ENCODE measurements at regions of chr3 and their contacts with region 1.

Region 1: GRCh38 chr3:195748661-195749060 is 27.9 kb downstream of the MUC20 start:
- DNase-seq: no peak
- ATAC-seq: no peak
- H3K4me3 ChIP-seq: peak overlapping the region; percentile 43 to 46
- H3K27ac ChIP-seq: 0 out of 2 replicates have a peak overlapping the region, but pooled peaks have one; percentile 2
- H3K4me1 ChIP-seq: peaks cover 7 to 13% of the 10 kb centered on the region in 2 experiments; a peak in 2 of 4 replicates
- H3K27me3 ChIP-seq: no peaks in the 10 kb centered on the region
- CTCF ChIP-seq: no peak
- POLR2A ChIP-seq: no peak
- RAD21 ChIP-seq: no peak

Region 2: GRCh38 chr3:195616712-195617086 is 132.0 kb before region 1 on chr3:
- CTCF ChIA-PET with region 1: no interaction called
- POLR2A ChIA-PET with region 1: no interaction called
- RAD21 ChIA-PET with region 1: no interaction called
- intact Hi-C with region 1: loop called (anchors 2 kb)
- DNase-seq: no peak
- ATAC-seq: no peak
- H3K4me3 ChIP-seq: no peak overlapping the region
- H3K27ac ChIP-seq: no peak overlapping the region
- H3K4me1 ChIP-seq: peaks cover 0 to 4% of the 10 kb centered on the region in 2 experiments; a peak in 1 of 4 replicates
- H3K27me3 ChIP-seq: no peaks in the 10 kb centered on the region
- CTCF ChIP-seq: no peak
- POLR2A ChIP-seq: no peak
- RAD21 ChIP-seq: no peak

Region 3: GRCh38 chr3:195729476-195730251 is 19.0 kb before region 1 on chr3:
- CTCF ChIA-PET with region 1: interaction called, 3 read pairs
- POLR2A ChIA-PET with region 1: no interaction called
- RAD21 ChIA-PET with region 1: no interaction called
- intact Hi-C with region 1: loop called (anchors 1 kb)
- DNase-seq: no peak
- ATAC-seq: no peak
- H3K4me3 ChIP-seq: no peak overlapping the region
- H3K27ac ChIP-seq: no peak overlapping the region
- H3K4me1 ChIP-seq: peaks cover 0 to 4% of the 10 kb centered on the region in 2 experiments; a peak in 1 of 4 replicates
- H3K27me3 ChIP-seq: no peaks in the 10 kb centered on the region
- CTCF ChIP-seq: no peak
- POLR2A ChIP-seq: no peak
- RAD21 ChIP-seq: no peak